Posterior vena cava (tissue), 2 donors: ENCODE measurements at regions of chr9 and their contacts with region 1.

Region 1: GRCh38 chr9:83299571-83299970 is 236.6 kb upstream of the RASEF start:
- DNase-seq: no peak

Region 2: DNA sequence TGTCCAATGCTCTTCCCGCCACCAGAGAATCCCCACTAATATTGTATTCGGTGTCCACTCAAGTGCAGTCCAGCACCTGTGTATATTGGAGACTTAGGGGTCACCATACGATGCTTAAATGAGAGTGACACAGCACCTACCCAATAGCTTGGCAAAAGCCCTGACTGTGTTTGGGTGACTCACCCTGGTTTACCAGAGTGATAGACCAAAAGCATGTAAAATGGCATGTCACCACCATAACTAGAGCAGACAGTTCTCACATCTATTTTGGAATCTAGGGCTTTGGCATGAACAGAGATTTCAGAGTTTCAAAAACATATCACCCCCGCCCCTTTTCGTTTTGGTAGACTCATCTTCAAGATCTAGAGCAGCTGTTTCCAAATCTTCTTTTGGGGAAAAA is 19.3 kb before region 1 on chr9:
- intact Hi-C with region 1: loop called in 1 of 2 experiments (anchors 1 kb)
- DNase-seq: no peak

Region 3: GRCh38 chr9:83330207-83331196 is 30.9 kb after region 1 on chr9:
- intact Hi-C with region 1: no loop called
- DNase-seq: no peak

Region 4: GRCh38 chr9:83342761-83343160 is 43.2 kb after region 1 on chr9:
- intact Hi-C with region 1: loop called in 1 of 2 experiments (anchors 1 kb)
- DNase-seq: no peak